CD4-positive, alpha-beta T cell (primary cell): ENCODE measurements at regions of chr13 and their contacts with region 1.

Region 1: DNA sequence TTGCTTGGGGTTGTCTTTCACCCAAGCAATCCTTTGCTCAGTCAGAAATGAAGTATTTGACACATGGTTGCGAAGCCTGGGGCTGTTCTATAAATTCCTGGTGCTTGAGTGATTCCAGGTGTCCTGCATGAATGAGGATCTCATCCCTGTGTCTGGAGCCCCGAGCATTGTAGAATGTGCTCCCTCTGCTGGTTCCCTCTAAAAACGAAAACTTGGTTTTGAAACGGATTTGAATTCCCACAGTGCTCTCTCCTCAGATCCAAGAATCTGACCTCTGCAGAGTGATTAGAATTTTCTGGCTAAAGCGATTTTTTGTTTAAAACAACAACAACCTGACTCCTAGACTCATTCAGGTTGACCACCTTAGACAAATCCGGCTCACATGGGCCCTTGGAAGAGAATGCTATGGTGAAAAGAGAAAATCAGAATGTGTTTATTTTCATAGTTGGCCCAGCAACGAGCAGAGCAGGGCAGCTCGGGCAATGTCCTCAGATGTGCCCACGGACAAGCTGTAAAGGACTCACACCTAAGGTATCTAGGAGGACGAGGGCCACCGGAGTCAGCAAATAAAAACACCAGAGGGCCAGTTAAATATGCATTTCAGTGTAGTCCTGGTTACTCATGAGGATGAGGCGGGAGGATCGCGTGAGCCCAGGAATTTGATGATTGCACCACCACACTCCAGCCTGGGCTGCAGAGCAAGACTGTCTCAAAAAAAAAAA is 8.7 kb upstream of the ATP12A start:
- DNase-seq: peak in 4 of 14 experiments; percentile 36 to 50 (median 41)
- ATAC-seq: peak; percentile 48
- H3K4me3 ChIP-seq: peak overlapping the region; percentile 17
- H3K4me3 Mint-ChIP-seq: no peak overlapping the region
- H3K27ac ChIP-seq: no peak overlapping the region
- H3K27ac Mint-ChIP-seq: no peak overlapping the region
- H3K4me1 ChIP-seq: peaks cover 4% of the 10 kb centered on the region
- H3K4me1 Mint-ChIP-seq: peaks cover 11% of the 10 kb centered on the region
- H3K27me3 ChIP-seq: peaks cover 0 to 5% of the 10 kb centered on the region in 2 experiments
- H3K27me3 Mint-ChIP-seq: peaks cover 26% of the 10 kb centered on the region
- CTCF ChIP-seq: peak; percentile 75

Region 2: GRCh38 chr13:24328145-24328544 is 343.4 kb before region 1 on chr13:
- CTCF ChIA-PET with region 1: no interaction called
- POLR2A ChIA-PET with region 1: no interaction called
- intact Hi-C with region 1: no loop called
- DNase-seq: no peak
- ATAC-seq: peak; percentile 39
- H3K4me3 ChIP-seq: no peak overlapping the region
- H3K4me3 Mint-ChIP-seq: no peak overlapping the region
- H3K27ac ChIP-seq: no peak overlapping the region
- H3K27ac Mint-ChIP-seq: no peak overlapping the region
- H3K4me1 ChIP-seq: no peaks in the 10 kb centered on the region
- H3K4me1 Mint-ChIP-seq: no peaks in the 10 kb centered on the region
- H3K27me3 ChIP-seq: peaks cover 0 to 8% of the 10 kb centered on the region in 2 experiments
- H3K27me3 Mint-ChIP-seq: peaks cover 55% of the 10 kb centered on the region
- CTCF ChIP-seq: no peak

Region 3: GRCh38 chr13:24574847-24575246 is 96.7 kb before region 1 on chr13:
- CTCF ChIA-PET with region 1: no interaction called
- POLR2A ChIA-PET with region 1: no interaction called
- intact Hi-C with region 1: loop called in 1 of 2 experiments (anchors 5 kb)
- DNase-seq: no peak
- ATAC-seq: no peak
- H3K4me3 ChIP-seq: no peak overlapping the region
- H3K4me3 Mint-ChIP-seq: no peak overlapping the region
- H3K27ac ChIP-seq: no peak overlapping the region
- H3K27ac Mint-ChIP-seq: no peak overlapping the region
- H3K4me1 ChIP-seq: no peaks in the 10 kb centered on the region
- H3K4me1 Mint-ChIP-seq: no peaks in the 10 kb centered on the region
- H3K27me3 ChIP-seq: no peaks in the 10 kb centered on the region
- H3K27me3 Mint-ChIP-seq: peaks cover 14% of the 10 kb centered on the region
- CTCF ChIP-seq: no peak

Region 4: DNA sequence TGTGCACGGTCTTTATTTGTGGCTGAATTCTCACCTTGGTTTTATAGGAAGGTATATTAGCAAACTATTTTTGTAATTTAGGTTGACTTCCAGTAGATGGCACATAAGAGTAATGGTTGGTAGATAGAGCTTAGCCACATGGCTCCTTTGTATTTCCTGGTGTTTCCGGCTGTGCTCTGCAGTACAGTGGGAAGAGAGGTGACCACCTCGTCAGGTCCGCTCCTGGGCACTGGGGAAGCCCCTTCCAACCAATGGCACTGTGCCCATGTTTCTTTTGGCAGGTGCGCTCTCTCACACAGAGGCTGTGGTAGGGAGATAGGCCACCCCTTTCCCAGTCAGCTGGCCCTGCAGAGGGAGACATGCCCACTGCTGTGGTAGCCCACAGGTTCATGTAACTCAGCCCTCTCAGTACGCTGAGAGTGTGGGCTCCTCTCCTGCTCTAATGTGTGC is 65.6 kb before region 1 on chr13:
- CTCF ChIA-PET with region 1: no interaction called
- POLR2A ChIA-PET with region 1: no interaction called
- intact Hi-C with region 1: loop called (anchors 1 kb)
- DNase-seq: peak in 1 of 14 experiments; percentile 53
- ATAC-seq: peak; percentile 91
- H3K4me3 ChIP-seq: no peak overlapping the region
- H3K4me3 Mint-ChIP-seq: no peak overlapping the region
- H3K27ac ChIP-seq: no peak overlapping the region
- H3K27ac Mint-ChIP-seq: no peak overlapping the region
- H3K4me1 ChIP-seq: peaks cover 5% of the 10 kb centered on the region
- H3K4me1 Mint-ChIP-seq: peaks cover 7% of the 10 kb centered on the region
- H3K27me3 ChIP-seq: no peaks in the 10 kb centered on the region
- H3K27me3 Mint-ChIP-seq: no peaks in the 10 kb centered on the region
- CTCF ChIP-seq: peak; percentile 49